ENCODE measurements at regions of chr22 and their contacts with region 1.

Region 1: DNA sequence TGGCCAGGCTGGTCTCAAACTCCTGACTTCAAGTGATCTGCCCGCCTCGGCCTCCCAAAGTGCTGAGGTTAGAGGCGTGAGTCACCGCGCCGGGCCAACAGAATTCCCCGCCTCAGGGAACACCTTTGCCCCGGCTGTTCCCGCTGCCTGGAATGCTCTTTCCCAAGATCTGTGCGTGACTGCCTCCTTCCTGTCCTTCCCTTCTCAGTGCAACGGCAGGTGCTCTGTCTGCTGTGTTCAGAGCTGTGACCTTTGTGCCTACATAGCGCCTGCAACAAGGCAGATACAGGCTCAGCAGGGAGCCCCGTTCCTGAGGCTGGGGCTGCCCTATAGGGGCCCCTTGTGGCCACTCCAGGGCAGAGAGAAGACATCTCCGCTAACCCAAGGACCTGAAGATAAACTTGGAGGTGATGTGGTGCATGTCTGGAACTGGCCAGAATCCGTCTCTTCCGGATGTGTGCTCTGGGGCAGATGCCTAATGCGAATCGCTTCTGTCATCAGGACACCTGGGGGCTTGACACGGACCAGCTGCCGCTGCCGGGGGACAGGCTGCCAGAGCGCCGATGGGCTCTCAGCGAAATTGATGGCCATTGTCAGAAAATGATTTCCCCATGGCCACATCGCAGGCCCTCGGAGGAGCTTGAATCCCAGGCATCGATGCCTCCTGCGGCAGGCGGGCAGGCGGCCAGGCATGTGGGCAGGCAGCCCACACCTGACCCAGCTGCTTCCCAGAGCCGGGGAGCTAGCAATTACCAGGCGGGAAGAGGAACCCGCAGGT is 43.5 kb upstream of the TCF20 start:
- DNase-seq: peak; percentile 84
- H3K4me3 ChIP-seq: no peak overlapping the region
- H3K27ac ChIP-seq: peak overlapping the region; percentile 6
- H3K4me1 ChIP-seq: peaks cover 54% of the 10 kb centered on the region
- H3K27me3 ChIP-seq: no peaks in the 10 kb centered on the region
- CTCF ChIP-seq: peak; percentile 45 to 68

Region 2: DNA sequence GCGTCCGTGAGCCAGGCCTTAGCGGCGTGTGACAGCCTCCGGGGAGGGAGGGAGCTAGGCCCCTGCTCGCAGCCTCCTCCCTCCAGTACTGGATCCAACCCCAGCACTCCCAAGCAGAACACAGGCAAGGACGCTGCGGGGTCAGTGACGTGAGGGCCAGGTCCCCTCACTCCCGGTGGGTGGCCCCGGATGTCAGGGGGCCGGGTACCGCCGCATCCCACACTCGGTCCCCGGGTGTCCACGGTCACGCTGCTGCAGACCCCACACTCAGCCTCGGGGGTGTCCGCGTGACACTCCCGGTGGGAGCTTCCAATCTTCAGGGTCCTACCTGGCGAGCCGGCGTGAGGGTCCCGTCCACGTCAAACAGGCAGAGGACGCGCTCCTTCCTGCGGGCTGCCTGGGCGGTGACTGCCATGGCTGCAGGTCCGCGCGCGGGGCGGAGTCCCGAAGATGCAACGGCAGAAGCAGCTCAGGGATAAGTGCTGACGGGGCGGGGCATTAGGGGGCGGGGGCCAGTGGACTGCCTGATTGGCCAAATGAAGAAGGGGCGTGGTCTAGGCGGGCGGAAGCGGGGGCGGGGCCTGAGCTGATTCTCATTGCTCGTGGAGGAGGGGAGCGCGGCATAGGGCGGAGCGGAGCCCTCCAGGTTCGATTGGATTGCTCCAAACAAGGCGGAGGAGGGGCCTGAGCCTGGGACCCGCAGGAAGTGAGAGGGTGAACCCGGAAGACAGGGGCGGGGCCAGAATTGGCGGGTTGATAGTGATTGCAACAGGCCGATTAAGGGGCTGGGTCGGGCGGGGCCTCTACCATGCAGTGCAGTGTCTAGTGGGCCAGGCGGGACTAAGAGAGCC is 724.4 kb before region 1 on chr22 and contains the start of gene PMM1:
- CTCF ChIA-PET with region 1: interaction called, 17 read pairs
- dilution Hi-C with region 1: no loop called
- in situ Hi-C with region 1: no loop called
- intact Hi-C with region 1: no loop called
- DNase-seq: peak; percentile 99
- H3K4me3 ChIP-seq: peak within 1 kb of the TSS; percentile 63 to 96 (median 78)
- H3K27ac ChIP-seq: peak within 1 kb of the TSS; percentile 60
- H3K4me1 ChIP-seq: peaks cover 10% of the 10 kb centered on the region
- H3K27me3 ChIP-seq: no peaks in the 10 kb centered on the region
- CTCF ChIP-seq: no peak
- total RNA-seq, gene PMM1: 21.2 to 44.8 TPM

Region 3: DNA sequence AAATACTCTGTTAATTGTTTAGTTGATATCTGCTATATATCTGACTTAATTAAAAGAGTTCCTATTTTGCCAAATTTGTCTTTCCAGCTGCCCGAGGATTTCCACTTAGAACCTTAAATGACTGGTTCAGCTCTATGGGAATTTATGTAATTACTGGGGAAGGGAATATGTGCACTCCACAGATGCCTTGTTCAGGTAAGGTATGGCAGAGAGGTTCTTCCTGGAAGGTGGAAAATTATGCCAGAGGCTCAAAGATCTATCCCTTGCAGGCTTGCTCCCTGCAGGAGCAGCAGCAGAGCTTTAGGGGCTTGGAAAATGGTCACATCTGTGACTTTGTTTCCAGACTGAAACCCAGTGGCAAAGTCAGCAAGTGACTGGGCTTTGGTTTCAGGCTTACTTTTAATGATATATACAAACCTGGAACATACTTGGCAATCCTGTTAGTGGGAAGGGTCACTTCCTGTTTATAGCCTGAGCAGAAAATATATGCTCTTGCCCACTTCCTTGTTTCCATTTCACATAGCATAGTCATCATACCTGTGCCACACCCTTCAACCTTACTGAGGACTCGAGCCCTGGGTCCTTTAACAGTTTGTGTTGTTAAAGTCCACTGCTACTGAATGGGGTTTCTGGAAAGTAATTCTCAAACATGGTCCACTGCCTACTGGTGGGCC is 291.7 kb before region 1 on chr22:
- CTCF ChIA-PET with region 1: no interaction called
- dilution Hi-C with region 1: no loop called
- in situ Hi-C with region 1: no loop called
- intact Hi-C with region 1: no loop called
- DNase-seq: peak; percentile 32
- H3K4me3 ChIP-seq: no peak overlapping the region
- H3K27ac ChIP-seq: peak overlapping the region; percentile 25
- H3K4me1 ChIP-seq: peaks cover 10% of the 10 kb centered on the region
- H3K27me3 ChIP-seq: peaks cover under 1% of the 10 kb centered on the region
- CTCF ChIP-seq: no peak

Region 4: GRCh38 chr22:42169055-42169469 is 144.9 kb before region 1 on chr22:
- CTCF ChIA-PET with region 1: no interaction called
- dilution Hi-C with region 1: no loop called
- in situ Hi-C with region 1: no loop called
- intact Hi-C with region 1: loop called (anchors 1 kb)
- DNase-seq: peak; percentile 17
- H3K4me3 ChIP-seq: no peak overlapping the region
- H3K27ac ChIP-seq: no peak overlapping the region
- H3K4me1 ChIP-seq: peaks cover 20% of the 10 kb centered on the region
- H3K27me3 ChIP-seq: no peaks in the 10 kb centered on the region
- CTCF ChIP-seq: peak; percentile 70 to 77

Region 5: DNA sequence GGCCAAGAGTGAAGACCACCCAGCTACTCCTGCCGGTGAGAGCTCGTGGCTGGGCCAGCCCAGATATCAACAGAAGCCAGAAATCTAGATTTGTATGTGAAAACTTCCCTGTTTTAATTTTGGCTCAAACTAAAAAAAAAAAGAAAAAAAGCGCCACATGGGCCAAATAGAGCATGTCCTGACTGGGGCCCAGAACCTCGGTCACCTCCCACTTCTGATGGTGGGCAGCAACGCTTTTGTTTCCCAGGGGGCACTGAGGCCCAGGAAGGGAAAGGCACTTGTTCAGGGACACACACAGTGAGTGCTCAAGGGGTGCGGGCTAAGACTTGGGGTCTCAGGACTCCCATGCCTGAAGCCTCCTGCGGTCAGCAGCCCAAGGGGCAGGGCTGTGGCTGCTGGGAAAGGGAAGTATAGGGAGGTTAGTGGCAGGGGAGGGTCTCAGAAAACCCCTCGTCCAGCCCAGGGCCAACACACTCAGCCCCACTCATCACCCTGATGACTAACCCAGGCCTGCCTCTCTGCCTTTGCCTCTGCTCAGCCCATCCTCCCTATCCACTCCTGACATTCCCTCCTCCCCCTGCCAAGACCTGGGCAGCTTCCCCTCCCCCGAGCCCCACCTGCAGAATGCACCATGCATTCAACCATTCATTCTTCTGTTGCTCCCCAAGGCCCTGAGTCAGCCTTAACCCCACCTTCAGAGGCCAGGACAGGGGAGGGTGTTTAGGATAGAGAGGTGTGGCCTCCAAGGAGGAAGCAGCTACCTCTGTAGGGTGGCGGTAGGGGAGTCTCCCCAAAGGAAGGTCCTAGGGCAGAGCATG is 13.5 kb before region 1 on chr22:
- CTCF ChIA-PET with region 1: no interaction called
- dilution Hi-C with region 1: no loop called
- in situ Hi-C with region 1: no loop called
- intact Hi-C with region 1: loop called (anchors 1 kb)
- DNase-seq: peak; percentile 83
- H3K4me3 ChIP-seq: no peak overlapping the region
- H3K27ac ChIP-seq: no peak overlapping the region
- H3K4me1 ChIP-seq: peaks cover 17% of the 10 kb centered on the region
- H3K27me3 ChIP-seq: no peaks in the 10 kb centered on the region
- CTCF ChIP-seq: no peak

Region 6: GRCh38 chr22:42565956-42566355 is 252.0 kb after region 1 on chr22:
- CTCF ChIA-PET with region 1: no interaction called
- dilution Hi-C with region 1: no loop called
- in situ Hi-C with region 1: no loop called
- intact Hi-C with region 1: no loop called
- DNase-seq: no peak
- H3K4me3 ChIP-seq: no peak overlapping the region
- H3K27ac ChIP-seq: no peak overlapping the region
- H3K4me1 ChIP-seq: peaks cover 5% of the 10 kb centered on the region
- H3K27me3 ChIP-seq: no peaks in the 10 kb centered on the region
- CTCF ChIP-seq: no peak

Measured in mammary epithelial cell (primary cell).